Panc1 (cell line): ENCODE measurements at regions of chr1 and their contacts with region 1.

Region 1: GRCh38 chr1:109083923-109084322 is 6.6 kb upstream of the TMEM167B start:
- DNase-seq: no peak
- ATAC-seq: no peak
- H3K4me3 ChIP-seq: no peak overlapping the region
- H3K27ac ChIP-seq: no peak overlapping the region
- H3K4me1 ChIP-seq: peaks cover 2% of the 10 kb centered on the region; the same call in 1 of the 2 replicates
- H3K27me3 ChIP-seq: no peaks in the 10 kb centered on the region
- CTCF ChIP-seq: no peak

Region 2: GRCh38 chr1:109027841-109028240 is 56.1 kb before region 1 on chr1:
- CTCF ChIA-PET with region 1: no interaction called
- POLR2A ChIA-PET with region 1: no interaction called
- in situ Hi-C with region 1: no loop called
- intact Hi-C with region 1: no loop called
- DNase-seq: no peak
- ATAC-seq: no peak
- H3K4me3 ChIP-seq: no peak overlapping the region
- H3K27ac ChIP-seq: no peak overlapping the region
- H3K4me1 ChIP-seq: no peaks in the 10 kb centered on the region
- H3K27me3 ChIP-seq: no peaks in the 10 kb centered on the region
- CTCF ChIP-seq: no peak

Region 3: GRCh38 chr1:109046671-109047070 is 37.3 kb before region 1 on chr1:
- CTCF ChIA-PET with region 1: interaction called, 11 read pairs
- POLR2A ChIA-PET with region 1: no interaction called
- in situ Hi-C with region 1: no loop called
- intact Hi-C with region 1: no loop called
- DNase-seq: no peak
- ATAC-seq: no peak
- H3K4me3 ChIP-seq: no peak overlapping the region
- H3K27ac ChIP-seq: no peak overlapping the region
- H3K4me1 ChIP-seq: no peaks in the 10 kb centered on the region
- H3K27me3 ChIP-seq: no peaks in the 10 kb centered on the region
- CTCF ChIP-seq: no peak